Mammary epithelial cell (primary cell): ENCODE measurements at regions of chr2 and their contacts with region 1.

Region 1: GRCh38 chr2:40363631-40364030 is 88.3 kb downstream of the SLC8A1 start:
- DNase-seq: no peak
- H3K4me3 ChIP-seq: no peak overlapping the region
- H3K27ac ChIP-seq: peak overlapping the region; percentile 51
- H3K4me1 ChIP-seq: peaks cover 13% of the 10 kb centered on the region
- H3K27me3 ChIP-seq: no peaks in the 10 kb centered on the region
- CTCF ChIP-seq: no peak

Region 2: DNA sequence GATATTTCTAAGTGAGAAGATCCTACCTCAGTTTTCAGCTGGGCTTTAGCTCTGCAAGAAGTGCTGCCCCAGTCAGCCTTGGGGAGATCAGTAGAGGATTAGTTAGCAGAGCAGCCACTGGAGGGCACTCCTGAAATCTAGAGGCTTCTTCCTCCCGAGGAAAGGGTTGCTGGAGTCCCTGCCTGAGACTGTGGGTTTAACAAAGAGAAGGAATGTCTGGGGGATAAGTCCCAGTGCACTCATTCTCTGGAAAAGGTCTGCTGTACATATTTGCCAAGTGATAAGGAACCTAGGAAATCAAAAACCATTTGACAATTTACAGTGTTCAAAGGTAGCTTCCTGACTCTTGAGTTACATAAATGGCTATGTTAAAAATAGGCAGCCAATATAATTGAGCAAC is 119.0 kb before region 1 on chr2:
- CTCF ChIA-PET with region 1: no interaction called
- dilution Hi-C with region 1: no loop called
- in situ Hi-C with region 1: no loop called
- intact Hi-C with region 1: loop called (anchors 2 kb)
- DNase-seq: peak; percentile 46
- H3K4me3 ChIP-seq: no peak overlapping the region
- H3K27ac ChIP-seq: no peak overlapping the region
- H3K4me1 ChIP-seq: peaks cover 8% of the 10 kb centered on the region
- H3K27me3 ChIP-seq: no peaks in the 10 kb centered on the region
- CTCF ChIP-seq: peak; percentile 51 to 80

Region 3: DNA sequence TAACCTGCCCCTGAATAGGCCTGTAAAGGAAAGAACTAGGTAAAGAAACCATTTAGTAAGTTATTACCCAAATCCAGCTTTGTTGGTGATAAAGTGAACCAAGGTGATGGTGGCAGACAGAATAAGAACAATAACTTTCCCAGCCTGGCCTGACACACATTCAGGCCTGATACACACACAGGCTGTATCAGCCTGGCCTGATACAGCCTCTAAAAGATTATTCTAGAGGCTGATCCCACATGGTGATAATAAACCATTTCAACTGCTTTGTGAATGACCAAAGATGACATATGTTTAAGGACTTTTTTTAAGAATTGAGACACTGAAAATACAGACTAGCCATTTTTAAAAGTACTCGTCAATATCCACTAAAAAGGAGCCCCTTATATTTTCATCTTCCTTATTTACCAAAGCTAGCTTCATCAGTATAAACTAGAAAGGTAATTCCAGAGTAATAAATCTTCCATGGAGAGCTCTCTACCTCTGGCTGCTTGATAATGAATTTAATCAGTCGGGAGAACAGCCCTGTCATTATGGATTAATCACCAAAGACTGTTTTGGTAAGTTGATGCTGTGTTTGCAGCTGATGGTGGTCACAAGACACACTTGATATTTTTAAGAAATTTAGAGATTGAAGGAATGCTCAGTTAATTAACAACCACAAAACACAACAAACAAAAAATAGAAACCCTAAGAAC is 11.1 kb after region 1 on chr2:
- CTCF ChIA-PET with region 1: no interaction called
- dilution Hi-C with region 1: no loop called
- in situ Hi-C with region 1: no loop called
- intact Hi-C with region 1: no loop called
- DNase-seq: no peak
- H3K4me3 ChIP-seq: no peak overlapping the region
- H3K27ac ChIP-seq: no peak overlapping the region
- H3K4me1 ChIP-seq: peaks cover 6% of the 10 kb centered on the region
- H3K27me3 ChIP-seq: no peaks in the 10 kb centered on the region
- CTCF ChIP-seq: no peak

Region 4: GRCh38 chr2:40401896-40402295 is 38.3 kb after region 1 on chr2:
- CTCF ChIA-PET with region 1: no interaction called
- dilution Hi-C with region 1: no loop called
- in situ Hi-C with region 1: no loop called
- intact Hi-C with region 1: loop called (anchors 5 kb)
- DNase-seq: peak; percentile 90
- H3K4me3 ChIP-seq: peak overlapping the region in 1 of 3 experiments; percentile 15
- H3K27ac ChIP-seq: peak overlapping the region; percentile 88
- H3K4me1 ChIP-seq: peaks cover 47% of the 10 kb centered on the region
- H3K27me3 ChIP-seq: no peaks in the 10 kb centered on the region
- CTCF ChIP-seq: no peak

Region 5: DNA sequence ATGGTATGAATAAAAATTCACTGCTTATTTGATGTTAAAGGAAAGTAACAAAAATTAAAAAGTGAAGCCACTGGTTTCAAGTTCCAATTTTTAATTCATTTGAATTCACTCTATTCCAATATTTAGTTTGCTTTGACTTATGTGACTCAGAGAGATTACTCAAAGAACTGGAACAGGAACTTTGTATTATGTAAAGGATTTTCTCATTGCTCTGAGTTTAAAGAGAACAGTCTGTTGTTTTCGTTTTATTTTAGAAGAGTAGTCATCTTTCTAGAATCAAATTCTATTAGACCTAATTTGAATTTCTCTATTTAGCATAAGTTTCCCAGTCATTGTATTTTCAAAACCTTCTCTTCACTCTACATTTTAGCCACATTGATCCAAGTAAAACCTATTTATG is 388.4 kb after region 1 on chr2:
- CTCF ChIA-PET with region 1: no interaction called
- dilution Hi-C with region 1: no loop called
- in situ Hi-C with region 1: no loop called
- intact Hi-C with region 1: no loop called
- DNase-seq: no peak
- H3K4me3 ChIP-seq: no peak overlapping the region
- H3K27ac ChIP-seq: no peak overlapping the region
- H3K4me1 ChIP-seq: no peaks in the 10 kb centered on the region
- H3K27me3 ChIP-seq: no peaks in the 10 kb centered on the region
- CTCF ChIP-seq: no peak